Left ventricle myocardium inferior (tissue), 1 donor: ENCODE measurements at regions of chr1 and their contacts with region 1.

Region 1: GRCh38 chr1:106304106-106304505 is 752.4 kb upstream of the PRMT6 start:
- DNase-seq: no peak
- H3K4me3 ChIP-seq: no peak overlapping the region
- H3K27ac ChIP-seq: no peak overlapping the region
- H3K4me1 ChIP-seq: no peaks in the 10 kb centered on the region
- H3K27me3 ChIP-seq: no peaks in the 10 kb centered on the region
- CTCF ChIP-seq: no peak

Region 2: DNA sequence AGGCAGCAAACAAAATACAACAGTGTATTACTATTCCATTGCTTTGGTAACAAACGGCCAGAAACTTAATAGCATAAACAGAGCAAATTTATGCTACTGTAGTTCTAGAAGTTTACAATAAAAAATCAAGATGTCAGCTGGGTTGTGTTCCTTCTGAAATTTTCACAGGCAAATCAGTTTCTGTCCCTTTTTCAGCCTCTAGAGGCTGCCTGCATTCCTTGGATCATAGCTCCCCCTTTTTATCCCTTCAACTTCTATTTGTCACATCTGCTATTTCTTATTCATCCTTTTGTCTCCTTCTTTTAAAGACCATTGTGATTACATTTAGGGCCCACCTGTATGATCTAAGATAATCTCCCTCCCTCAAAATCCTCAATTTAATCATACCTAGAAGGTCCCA is 343.2 kb after region 1 on chr1:
- intact Hi-C with region 1: loop called (anchors 5 kb)
- DNase-seq: no peak
- H3K4me3 ChIP-seq: no peak overlapping the region
- H3K27ac ChIP-seq: no peak overlapping the region
- H3K4me1 ChIP-seq: no peaks in the 10 kb centered on the region
- H3K27me3 ChIP-seq: no peaks in the 10 kb centered on the region
- CTCF ChIP-seq: no peak